ENCODE measurements at regions of chr4 and their contacts with region 1.

Region 1: DNA sequence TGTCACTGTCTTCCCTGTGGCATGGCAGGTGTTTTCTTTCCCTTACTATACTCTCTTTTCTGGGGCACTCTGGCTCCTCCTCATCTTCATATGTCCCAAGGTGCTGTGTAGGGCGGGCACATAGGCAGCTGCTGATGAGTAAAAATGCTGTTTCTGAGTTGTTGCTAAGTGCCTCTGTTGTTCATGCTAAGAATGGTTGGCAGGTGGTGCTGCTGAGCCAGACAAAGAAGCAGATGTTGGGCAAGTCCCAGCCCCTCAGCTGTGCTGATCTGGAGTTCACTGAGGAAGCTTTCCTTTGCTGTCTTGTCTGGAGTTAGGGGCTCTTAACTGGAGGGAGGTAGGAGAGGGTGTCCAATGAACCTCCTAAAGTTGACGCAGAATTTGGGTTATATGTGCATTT is 40.6 kb downstream of the HADH start:
- DNase-seq: peak; percentile 16
- H3K4me3 ChIP-seq: no peak overlapping the region
- H3K27me3 ChIP-seq: no peaks in the 10 kb centered on the region
- CTCF ChIP-seq: peak; percentile 73

Region 2: DNA sequence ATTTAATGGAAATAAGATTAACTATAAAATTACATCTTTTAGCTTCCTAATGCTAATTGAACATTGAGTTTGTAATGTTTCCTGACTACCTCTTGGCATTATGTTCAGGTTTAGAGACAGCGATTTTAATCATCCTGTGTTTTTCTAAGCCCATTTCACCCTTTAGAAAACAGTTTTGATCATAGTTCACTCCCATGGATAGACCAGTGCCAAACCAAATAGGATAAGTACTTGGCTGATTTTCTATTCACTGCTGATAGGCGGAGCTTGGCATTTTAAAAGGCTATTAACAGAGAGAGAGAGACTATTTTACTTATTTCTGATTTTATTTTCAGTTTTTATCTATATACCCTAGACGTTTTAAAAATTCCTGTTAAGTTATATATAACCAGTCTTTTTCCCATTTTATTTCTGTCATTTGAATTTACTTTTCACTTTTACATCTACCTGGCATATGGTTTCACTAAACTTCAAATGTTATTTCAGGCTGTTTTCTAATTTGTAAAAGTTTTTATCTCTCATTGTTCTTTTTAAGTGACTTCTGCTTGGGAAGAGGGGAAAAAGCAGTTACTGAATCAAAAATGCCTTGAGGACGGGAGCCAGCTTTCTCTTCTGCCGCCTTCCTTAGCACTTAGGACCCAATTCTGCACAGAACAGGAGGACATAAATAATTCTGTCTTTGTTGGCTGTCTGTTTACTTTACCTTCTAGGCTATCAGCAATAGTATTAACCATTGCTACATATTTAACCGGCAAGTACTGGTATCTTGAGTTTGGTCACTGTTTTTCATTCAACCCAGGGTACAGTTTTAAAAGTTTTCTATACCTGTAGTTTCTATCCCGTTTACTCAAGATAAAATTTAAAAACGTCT is 159.2 kb before region 1 on chr4:
- CTCF ChIA-PET with region 1: no interaction called
- POLR2A ChIA-PET with region 1: no interaction called
- DNase-seq: no peak
- H3K4me3 ChIP-seq: no peak overlapping the region
- H3K27me3 ChIP-seq: no peaks in the 10 kb centered on the region
- CTCF ChIP-seq: no peak

Region 3: DNA sequence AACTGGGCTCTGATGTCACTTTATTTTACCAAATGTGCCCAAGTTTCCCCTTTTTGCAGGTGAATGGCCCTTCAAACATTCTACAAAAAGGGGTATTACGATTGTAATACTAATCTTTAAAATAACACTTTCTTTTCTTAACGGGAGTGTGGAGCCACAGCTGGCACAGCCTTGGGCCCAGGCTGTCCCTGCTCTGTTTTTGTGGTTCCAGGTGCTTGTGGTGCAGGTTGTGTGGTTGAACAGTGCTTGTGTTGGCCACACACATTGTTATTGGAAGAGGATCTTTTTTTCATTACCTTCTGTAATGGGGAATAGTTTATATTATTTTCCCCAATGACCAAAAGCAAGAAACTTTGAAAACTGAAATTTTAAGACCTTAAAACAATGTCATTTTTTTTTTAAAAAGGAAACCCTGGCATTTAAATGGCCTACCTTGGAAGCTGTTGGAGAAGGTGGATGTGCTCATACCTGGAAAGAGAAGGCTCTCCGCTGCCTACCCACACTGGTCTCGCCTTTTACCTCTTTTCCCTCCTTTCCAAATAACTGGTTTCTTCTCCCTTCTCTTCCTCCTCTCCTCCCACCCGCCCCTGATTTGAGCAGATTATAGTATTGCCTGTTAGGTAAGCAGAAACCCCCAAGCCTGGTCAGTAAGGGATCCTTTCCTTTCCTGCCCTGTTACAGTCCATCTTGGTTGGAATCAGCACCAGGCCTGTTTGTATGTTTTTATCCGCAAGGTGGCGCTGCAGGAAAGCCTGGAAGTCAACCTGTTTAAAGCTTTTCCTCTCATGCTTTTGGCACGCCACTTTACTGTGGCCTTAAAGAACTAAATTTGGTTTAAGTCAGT is 12.1 kb before region 1 on chr4:
- CTCF ChIA-PET with region 1: interaction called, 65 read pairs
- POLR2A ChIA-PET with region 1: no interaction called
- DNase-seq: peak; percentile 18
- H3K4me3 ChIP-seq: no peak overlapping the region
- H3K27me3 ChIP-seq: no peaks in the 10 kb centered on the region
- CTCF ChIP-seq: peak; percentile 82

Region 4: GRCh38 chr4:108060164-108060563 is 29.8 kb after region 1 on chr4:
- CTCF ChIA-PET with region 1: interaction called, 22 read pairs
- POLR2A ChIA-PET with region 1: no interaction called
- DNase-seq: no peak
- H3K4me3 ChIP-seq: no peak overlapping the region
- H3K27me3 ChIP-seq: no peaks in the 10 kb centered on the region
- CTCF ChIP-seq: no peak

Region 5: GRCh38 chr4:108130954-108131353 is 100.6 kb after region 1 on chr4:
- CTCF ChIA-PET with region 1: no interaction called
- POLR2A ChIA-PET with region 1: no interaction called
- DNase-seq: no peak
- H3K4me3 ChIP-seq: no peak overlapping the region
- H3K27me3 ChIP-seq: no peaks in the 10 kb centered on the region
- CTCF ChIP-seq: no peak

Region 6: GRCh38 chr4:108492816-108493595 is 462.7 kb after region 1 on chr4:
- CTCF ChIA-PET with region 1: interaction called, 14 read pairs
- POLR2A ChIA-PET with region 1: no interaction called
- DNase-seq: no peak
- H3K4me3 ChIP-seq: no peak overlapping the region
- H3K27me3 ChIP-seq: no peaks in the 10 kb centered on the region
- CTCF ChIP-seq: peak; percentile 63

Region 7: DNA sequence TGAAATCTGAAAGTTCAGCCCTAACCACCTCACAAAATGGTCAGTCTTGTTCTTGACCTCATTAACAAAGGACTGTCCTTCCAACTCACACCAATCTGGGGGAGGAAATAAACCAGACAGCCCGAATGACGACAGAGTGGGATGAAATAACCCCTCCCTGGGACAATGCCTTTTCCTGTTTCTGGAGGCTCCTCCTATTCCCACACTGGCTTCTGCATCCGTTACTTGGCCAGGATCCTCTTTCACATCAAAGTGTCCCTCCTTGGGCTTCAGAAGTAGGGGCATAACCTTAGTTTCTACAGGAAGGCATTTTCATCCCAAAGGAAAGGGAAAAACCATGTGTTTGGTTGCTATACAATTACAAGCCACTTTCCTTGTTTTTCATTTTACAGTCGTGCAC is 530.3 kb after region 1 on chr4:
- CTCF ChIA-PET with region 1: interaction called, 10 read pairs
- POLR2A ChIA-PET with region 1: no interaction called
- DNase-seq: no peak
- H3K4me3 ChIP-seq: no peak overlapping the region
- H3K27me3 ChIP-seq: no peaks in the 10 kb centered on the region
- CTCF ChIP-seq: no peak

Region 8: DNA sequence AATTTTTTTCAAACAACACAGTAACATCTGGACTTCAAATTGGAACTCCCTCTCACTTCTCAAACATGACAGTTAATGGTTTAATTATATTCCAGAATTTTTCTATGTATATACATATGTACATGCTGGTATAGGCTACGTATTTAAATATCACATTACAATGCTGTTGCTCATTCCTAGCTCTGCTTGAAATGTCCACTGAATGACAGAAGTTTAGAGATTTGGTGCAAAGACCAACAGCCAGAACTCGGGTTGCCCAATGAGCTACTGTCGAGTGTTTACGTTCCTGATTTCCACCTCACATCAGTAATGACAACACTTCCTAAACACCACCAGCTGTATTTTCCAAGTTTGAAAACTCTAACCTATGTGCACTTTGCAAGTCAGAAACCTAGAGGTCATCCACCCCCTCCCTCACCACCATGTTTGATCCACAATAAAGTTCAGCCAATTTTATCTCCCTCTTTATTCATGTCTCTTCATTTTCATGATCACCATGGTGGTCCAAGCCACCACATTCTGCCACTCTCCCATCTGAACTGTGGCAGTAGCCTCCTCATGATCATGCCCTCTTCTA is 540.7 kb after region 1 on chr4:
- CTCF ChIA-PET with region 1: interaction called, 98 read pairs
- POLR2A ChIA-PET with region 1: no interaction called
- DNase-seq: no peak
- H3K4me3 ChIP-seq: no peak overlapping the region
- H3K27me3 ChIP-seq: 0 out of 2 replicates have a peak, but pooled peaks cover 2% of the 10 kb centered on the region
- CTCF ChIP-seq: no peak

Region 9: GRCh38 chr4:108637856-108638255 is 607.5 kb after region 1 on chr4:
- CTCF ChIA-PET with region 1: interaction called, 10 read pairs
- POLR2A ChIA-PET with region 1: no interaction called
- DNase-seq: no peak
- H3K4me3 ChIP-seq: no peak overlapping the region
- H3K27me3 ChIP-seq: no peaks in the 10 kb centered on the region
- CTCF ChIP-seq: peak; percentile 34

Measured in BJ (cell line).